ENCODE measurements at regions of chr19 and their contacts with region 1.

Region 1: GRCh38 chr19:52742516-52742915 is 7.7 kb upstream of the ZNF611 start:
- DNase-seq: no peak
- H3K4me3 ChIP-seq: no peak overlapping the region
- H3K4me3 Mint-ChIP-seq: no peak overlapping the region
- H3K27ac Mint-ChIP-seq: peak overlapping the region; percentile 72
- H3K4me1 ChIP-seq: peaks cover 27% of the 10 kb centered on the region
- H3K4me1 Mint-ChIP-seq: peaks cover 23% of the 10 kb centered on the region
- H3K27me3 ChIP-seq: no peaks in the 10 kb centered on the region
- H3K27me3 Mint-ChIP-seq: no peaks in the 10 kb centered on the region
- CTCF ChIP-seq: no peak

Region 2: DNA sequence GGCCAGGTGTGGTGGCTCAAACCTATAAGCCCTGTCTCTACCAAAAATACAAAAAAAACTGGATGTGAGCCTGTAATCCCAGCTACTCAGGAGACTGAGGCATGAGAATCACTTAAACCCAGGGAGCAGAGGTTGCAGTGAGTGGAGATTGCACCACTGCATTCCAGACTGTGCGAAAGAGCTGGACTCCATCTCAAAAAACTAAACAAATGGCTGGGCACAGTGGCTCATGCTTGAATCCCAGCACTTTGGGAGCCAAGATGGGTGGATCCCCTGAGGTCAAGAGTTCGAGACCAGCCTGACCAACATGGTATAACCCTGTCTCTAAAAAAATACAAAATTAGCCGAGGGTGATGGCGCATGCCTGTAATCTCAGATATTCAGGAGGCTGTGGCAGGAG is 69.5 kb before region 1 on chr19:
- CTCF ChIA-PET with region 1: no interaction called
- POLR2A ChIA-PET with region 1: no interaction called
- intact Hi-C with region 1: no loop called
- DNase-seq: no peak
- H3K4me3 ChIP-seq: no peak overlapping the region
- H3K4me3 Mint-ChIP-seq: no peak overlapping the region
- H3K27ac Mint-ChIP-seq: no peak overlapping the region
- H3K4me1 ChIP-seq: no peaks in the 10 kb centered on the region
- H3K4me1 Mint-ChIP-seq: peaks cover 7% of the 10 kb centered on the region
- H3K27me3 ChIP-seq: no peaks in the 10 kb centered on the region
- H3K27me3 Mint-ChIP-seq: no peaks in the 10 kb centered on the region
- CTCF ChIP-seq: no peak

Region 3: GRCh38 chr19:52690369-52691214 is 51.9 kb before region 1 on chr19:
- CTCF ChIA-PET with region 1: no interaction called
- POLR2A ChIA-PET with region 1: no interaction called
- intact Hi-C with region 1: loop called (anchors 1 kb)
- DNase-seq: peak; percentile 92 to 93
- H3K4me3 ChIP-seq: peak overlapping the region; percentile 66
- H3K4me3 Mint-ChIP-seq: peak overlapping the region; percentile 80
- H3K27ac Mint-ChIP-seq: peak overlapping the region; percentile 69
- H3K4me1 ChIP-seq: 0 out of 2 replicates have a peak, but pooled peaks cover 9% of the 10 kb centered on the region
- H3K4me1 Mint-ChIP-seq: peaks cover 26% of the 10 kb centered on the region
- H3K27me3 ChIP-seq: no peaks in the 10 kb centered on the region
- H3K27me3 Mint-ChIP-seq: no peaks in the 10 kb centered on the region
- CTCF ChIP-seq: peak; percentile 18 to 52

Measured in Caco-2 (cell line).